Naive thymus-derived CD4-positive, alpha-beta T cell (primary cell): ENCODE measurements at regions of chr17 and their contacts with region 1.

Region 1: DNA sequence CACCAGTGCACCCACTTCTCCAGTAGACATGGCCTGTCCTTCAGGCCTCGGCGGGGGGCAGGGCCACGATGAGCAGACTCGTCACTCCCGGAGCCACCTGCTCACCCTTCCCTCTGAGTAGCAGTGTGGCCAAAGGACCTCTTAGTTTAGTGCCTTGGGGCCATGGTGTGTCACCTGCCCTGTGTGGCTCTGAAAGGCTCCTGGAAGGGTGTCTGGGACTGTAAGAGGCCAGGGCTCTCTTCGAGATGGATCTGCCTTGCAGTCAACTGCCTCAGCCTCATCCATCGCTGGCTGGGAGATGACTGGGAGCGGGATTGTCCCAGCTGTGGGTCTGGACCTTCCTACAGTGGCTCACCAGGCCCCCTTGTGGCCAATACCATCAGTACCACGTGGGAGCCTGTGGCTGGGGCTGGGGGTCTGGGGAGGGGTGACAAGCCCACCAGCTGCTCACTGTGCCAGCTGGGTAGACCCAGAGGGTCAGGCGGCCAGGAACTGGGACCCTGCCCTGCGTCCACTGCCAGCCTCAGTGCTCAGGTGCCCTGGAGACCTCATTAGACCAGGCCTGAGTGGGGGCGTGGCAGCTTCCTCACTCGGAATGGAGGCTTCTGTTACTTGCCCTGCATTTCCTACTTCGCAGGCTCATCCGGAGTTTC is 133.4 kb downstream of the OR1D5 start:
- DNase-seq: peak in 2 of 9 donors; percentile 3 to 12
- ATAC-seq: peak; percentile 48
- H3K4me3 ChIP-seq: no peak overlapping the region
- H3K4me3 Mint-ChIP-seq: no peak overlapping the region
- H3K27ac ChIP-seq: no peak overlapping the region
- H3K27ac Mint-ChIP-seq: no peak overlapping the region
- H3K4me1 ChIP-seq: no peaks in the 10 kb centered on the region
- H3K4me1 Mint-ChIP-seq: peaks cover 6 to 25% (median 18%) of the 10 kb centered on the region in 7 donors
- H3K27me3 ChIP-seq: no peaks in the 10 kb centered on the region
- H3K27me3 Mint-ChIP-seq: no peaks in the 10 kb centered on the region

Region 2: GRCh38 chr17:2580661-2581060 is 349.3 kb before region 1 on chr17:
- CTCF ChIA-PET with region 1: no interaction called
- POLR2A ChIA-PET with region 1: no interaction called
- intact Hi-C with region 1: no loop called
- DNase-seq: no peak
- ATAC-seq: no peak
- H3K4me3 ChIP-seq: no peak overlapping the region
- H3K4me3 Mint-ChIP-seq: no peak overlapping the region
- H3K27ac ChIP-seq: no peak overlapping the region
- H3K27ac Mint-ChIP-seq: no peak overlapping the region
- H3K4me1 ChIP-seq: no peaks in the 10 kb centered on the region
- H3K4me1 Mint-ChIP-seq: no peaks in the 10 kb centered on the region
- H3K27me3 ChIP-seq: no peaks in the 10 kb centered on the region
- H3K27me3 Mint-ChIP-seq: peaks cover 0 to 13% (median 7%) of the 10 kb centered on the region in 5 donors

Region 3: DNA sequence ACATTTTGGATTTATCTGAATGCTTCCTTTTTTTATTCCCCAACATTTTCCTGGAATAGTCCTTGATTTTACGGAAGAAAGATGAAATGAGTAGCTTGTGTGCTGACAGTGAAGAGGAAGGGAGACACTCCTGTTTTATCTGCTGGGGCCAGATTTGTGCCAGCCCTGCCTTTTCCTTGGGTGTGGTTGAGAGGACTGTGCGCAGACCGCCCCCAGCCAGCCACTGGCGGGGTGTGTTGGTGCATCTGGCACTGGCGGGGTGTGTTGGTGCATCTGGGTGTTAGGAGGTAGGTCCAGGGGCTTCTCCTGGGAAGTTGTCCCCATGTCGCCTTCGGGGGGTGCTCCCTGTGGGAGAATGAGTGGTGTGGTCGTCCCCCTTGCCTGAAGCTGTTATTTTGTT is 94.2 kb before region 1 on chr17:
- CTCF ChIA-PET with region 1: no interaction called
- POLR2A ChIA-PET with region 1: no interaction called
- intact Hi-C with region 1: no loop called
- DNase-seq: no peak
- ATAC-seq: no peak
- H3K4me3 ChIP-seq: no peak overlapping the region
- H3K4me3 Mint-ChIP-seq: no peak overlapping the region
- H3K27ac ChIP-seq: no peak overlapping the region
- H3K27ac Mint-ChIP-seq: no peak overlapping the region
- H3K4me1 ChIP-seq: no peaks in the 10 kb centered on the region
- H3K4me1 Mint-ChIP-seq: peaks cover 0 to 14% (median 12%) of the 10 kb centered on the region in 7 donors
- H3K27me3 ChIP-seq: no peaks in the 10 kb centered on the region
- H3K27me3 Mint-ChIP-seq: peaks cover 0 to 3% (median 0%) of the 10 kb centered on the region in 5 donors

Region 4: GRCh38 chr17:3004133-3004801 is 74.3 kb after region 1 on chr17:
- CTCF ChIA-PET with region 1: interaction called, 3 read pairs
- POLR2A ChIA-PET with region 1: no interaction called
- intact Hi-C with region 1: loop called in 1 of 2 experiments (anchors 5 kb)
- DNase-seq: peak in 8 of 9 donors; percentile 61 to 76 (median 72)
- ATAC-seq: peak; percentile 87
- H3K4me3 ChIP-seq: peak overlapping the region; percentile 57
- H3K4me3 Mint-ChIP-seq: peak overlapping the region in 9 of 10 donors; percentile 79 to 88 (median 84)
- H3K27ac ChIP-seq: peak overlapping the region; percentile 48
- H3K27ac Mint-ChIP-seq: peak overlapping the region in 8 of 9 donors; percentile 72 to 92 (median 86)
- H3K4me1 ChIP-seq: peaks cover 0 to 21% of the 10 kb centered on the region in 2 donors
- H3K4me1 Mint-ChIP-seq: peaks cover 0 to 36% (median 23%) of the 10 kb centered on the region in 7 donors
- H3K27me3 ChIP-seq: no peaks in the 10 kb centered on the region
- H3K27me3 Mint-ChIP-seq: no peaks in the 10 kb centered on the region

Region 5: DNA sequence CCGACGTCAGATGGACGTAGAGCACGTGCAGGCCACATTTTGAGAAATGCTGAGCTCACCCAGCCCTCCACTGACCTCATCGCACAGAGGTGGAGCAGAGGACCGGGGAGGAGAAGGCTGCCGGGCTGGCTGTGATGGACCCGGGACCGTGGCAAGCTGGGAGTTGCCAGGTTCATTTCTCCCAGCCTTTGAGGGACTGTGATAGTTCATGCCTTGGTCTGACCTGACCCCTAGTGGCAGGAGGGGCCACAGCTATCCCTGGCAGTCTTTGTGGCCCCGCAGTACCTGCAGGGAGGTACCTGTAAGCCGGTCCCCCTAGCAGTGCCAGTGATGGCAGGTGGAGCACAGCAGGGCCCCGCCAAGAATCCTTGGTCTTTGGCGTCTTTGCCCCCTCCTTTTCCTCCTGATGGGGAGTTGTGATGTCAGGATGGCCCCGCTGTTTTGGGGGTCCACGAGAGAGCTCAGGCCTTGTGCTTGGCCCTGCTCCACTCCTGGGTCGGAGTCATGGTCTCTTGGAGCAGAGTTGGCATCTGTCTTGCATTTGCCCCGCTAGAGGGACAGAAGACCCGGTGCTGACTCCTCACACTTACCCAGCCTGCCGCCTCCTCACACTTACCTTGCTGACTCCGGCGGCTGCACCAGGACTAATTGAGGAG is 83.0 kb after region 1 on chr17:
- CTCF ChIA-PET with region 1: interaction called, 3 read pairs
- POLR2A ChIA-PET with region 1: no interaction called
- intact Hi-C with region 1: loop called in 1 of 2 experiments (anchors 1 kb)
- DNase-seq: peak; percentile 38 to 62 (median 53)
- ATAC-seq: peak; percentile 82
- H3K4me3 ChIP-seq: no peak overlapping the region
- H3K4me3 Mint-ChIP-seq: no peak overlapping the region
- H3K27ac ChIP-seq: no peak overlapping the region
- H3K27ac Mint-ChIP-seq: no peak overlapping the region
- H3K4me1 ChIP-seq: no peaks in the 10 kb centered on the region
- H3K4me1 Mint-ChIP-seq: peaks cover 0 to 3% (median 0%) of the 10 kb centered on the region in 7 donors
- H3K27me3 ChIP-seq: no peaks in the 10 kb centered on the region
- H3K27me3 Mint-ChIP-seq: no peaks in the 10 kb centered on the region